Common myeloid progenitor, CD34-positive (primary cell): ENCODE measurements at regions of chr5 and their contacts with region 1.

Region 1: DNA sequence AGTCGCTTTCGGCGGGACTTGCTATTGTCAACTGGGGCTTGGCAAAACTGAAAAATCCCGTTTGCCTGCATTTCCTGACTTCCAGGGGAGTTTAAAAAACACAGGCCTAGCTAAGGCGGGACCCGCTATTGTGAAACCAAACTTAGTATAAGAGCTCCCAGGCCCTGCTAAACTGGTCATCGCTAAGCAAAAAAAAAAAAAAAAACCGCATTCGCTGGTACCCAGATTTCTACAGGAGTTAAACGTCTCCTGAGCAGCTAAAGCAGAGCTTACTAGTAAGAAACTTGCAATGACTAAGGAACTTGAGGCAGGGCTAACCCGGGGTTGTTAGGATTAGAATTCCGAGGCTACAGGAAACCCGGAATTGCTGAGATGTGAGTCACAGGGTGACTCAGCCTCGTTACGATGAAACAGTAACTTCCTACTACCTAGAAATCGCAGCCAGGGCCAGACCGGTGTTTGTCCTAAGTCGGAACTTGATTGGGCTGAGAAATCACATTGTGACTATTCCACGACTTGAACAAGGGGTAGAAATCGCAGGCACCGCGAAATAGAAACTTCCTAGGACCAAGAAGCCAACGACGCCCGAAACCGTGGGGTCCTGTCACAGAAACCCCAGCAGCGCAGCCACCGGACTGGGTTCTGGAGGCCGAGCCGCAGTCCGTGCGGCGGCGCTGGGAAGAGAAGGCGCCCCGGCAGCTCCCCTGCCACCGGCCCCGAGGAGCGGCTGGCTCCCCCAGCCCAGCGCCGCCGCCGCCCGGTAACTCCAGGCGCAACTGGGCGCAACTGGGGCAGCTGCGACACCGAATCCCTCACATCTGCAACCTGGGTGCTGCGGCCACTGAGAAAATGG is 89.5 kb downstream of the ANXA2R start:
- DNase-seq: peak; percentile 97 to 98 (median 98)
- H3K4me3 ChIP-seq: peak overlapping the region; percentile 56 to 84 (median 74)
- H3K27ac ChIP-seq: peak overlapping the region; percentile 89 to 97
- H3K4me1 ChIP-seq: peaks cover 8 to 42% (median 36%) of the 10 kb centered on the region in 4 experiments
- H3K27me3 ChIP-seq: peaks cover 0 to 5% (median 0%) of the 10 kb centered on the region in 5 experiments

Region 2: GRCh38 chr5:42994246-42995151 is 43.8 kb after region 1 on chr5:
- CTCF ChIA-PET with region 1: interaction called, 102 read pairs
- POLR2A ChIA-PET with region 1: interaction called, 70 read pairs
- DNase-seq: peak; percentile 90 to 96 (median 95)
- H3K4me3 ChIP-seq: peak overlapping the region; percentile 67 to 98 (median 91)
- H3K27ac ChIP-seq: peak overlapping the region; percentile 97 to 98
- H3K4me1 ChIP-seq: peaks cover 12 to 46% (median 35%) of the 10 kb centered on the region in 4 experiments
- H3K27me3 ChIP-seq: no peaks in the 10 kb centered on the region

Region 3: DNA sequence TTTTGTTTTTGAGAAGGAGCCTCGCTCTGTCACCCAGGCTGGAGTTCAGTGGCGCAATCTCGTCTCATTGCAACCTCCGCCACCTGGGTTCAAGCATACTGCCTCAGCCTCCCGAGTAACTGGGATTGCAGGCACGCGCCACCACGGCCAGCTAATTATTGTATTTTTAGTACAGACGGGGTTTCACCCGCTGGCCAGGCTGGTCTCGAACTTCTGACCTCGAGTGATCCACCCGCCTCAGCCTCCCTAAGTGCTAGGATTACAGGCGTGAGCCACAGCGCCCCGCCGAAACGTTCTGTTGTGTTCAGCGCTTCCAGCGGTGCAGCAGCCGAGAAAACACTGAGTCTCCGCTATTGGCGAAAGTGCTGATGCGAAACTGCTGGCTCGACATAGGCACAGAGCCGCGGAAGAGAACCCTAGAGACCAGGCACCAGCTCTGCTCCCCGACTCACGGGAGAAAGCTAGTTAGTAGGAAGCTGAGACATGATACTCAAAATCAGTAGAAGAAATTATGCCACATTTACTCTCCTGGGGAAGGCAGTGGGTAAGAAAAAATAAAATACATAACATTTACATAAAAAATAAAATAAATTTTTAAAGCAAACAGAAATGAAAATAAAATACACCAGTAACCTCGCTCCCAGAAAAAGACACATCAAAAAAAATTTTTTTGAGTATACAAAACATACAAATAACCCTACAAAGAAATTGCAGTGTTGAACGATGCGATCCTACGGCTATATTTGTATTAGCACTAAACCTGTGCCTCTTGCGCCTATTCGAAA is 57.9 kb after region 1 on chr5:
- CTCF ChIA-PET with region 1: interaction called, 11 read pairs
- POLR2A ChIA-PET with region 1: interaction called, 10 read pairs
- DNase-seq: peak; percentile 98 to 99 (median 99)
- H3K4me3 ChIP-seq: peak overlapping the region; percentile 32 to 95 (median 82)
- H3K27ac ChIP-seq: peak overlapping the region; percentile 89 to 91
- H3K4me1 ChIP-seq: peaks cover 12 to 44% (median 31%) of the 10 kb centered on the region in 4 experiments
- H3K27me3 ChIP-seq: no peaks in the 10 kb centered on the region